ENCODE measurements at regions of chr15 and their contacts with region 1.

Region 1: GRCh38 chr15:30650012-30650929 is 24.3 kb downstream of the ARHGAP11B start:
- DNase-seq: peak; percentile 48
- CTCF ChIP-seq: no peak

Region 2: GRCh38 chr15:30770759-30771158 is 120.5 kb after region 1 on chr15:
- in situ Hi-C with region 1: loop called (anchors 25 kb)
- DNase-seq: no peak
- CTCF ChIP-seq: no peak

Region 3: DNA sequence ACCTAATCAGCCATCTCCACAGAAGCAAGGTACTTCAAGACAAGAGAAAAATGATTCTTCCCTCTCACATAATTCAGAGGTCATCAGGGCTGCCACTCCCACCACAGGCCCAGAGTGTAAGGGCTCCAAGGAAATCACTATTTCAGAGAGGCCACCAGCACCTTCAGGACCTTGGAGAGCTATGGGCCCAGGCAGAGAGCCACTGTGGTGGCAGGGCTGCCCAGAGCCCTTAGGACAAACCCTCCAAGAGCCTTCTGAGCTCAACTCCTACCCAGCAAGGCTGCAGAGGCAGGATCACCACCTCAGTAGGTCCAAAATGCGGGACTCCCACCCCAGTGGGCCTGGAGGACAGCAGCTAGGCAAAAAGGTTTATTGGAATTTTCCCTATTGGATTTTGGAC is 235.5 kb after region 1 on chr15:
- in situ Hi-C with region 1: loop called (anchors 25 kb)
- DNase-seq: no peak
- CTCF ChIP-seq: no peak

Region 4: GRCh38 chr15:31060429-31061140 is 410.3 kb after region 1 on chr15:
- in situ Hi-C with region 1: no loop called
- DNase-seq: no peak
- CTCF ChIP-seq: no peak

Measured in GM13977 (cell line).